IMR-90 (cell line): ENCODE measurements at regions of chr2 and their contacts with region 1.

Region 1: GRCh38 chr2:215698566-215698965 is 262.7 kb upstream of the FN1 start:
- DNase-seq: peak; percentile 96
- ATAC-seq: peak; percentile 25
- H3K4me3 ChIP-seq: no peak overlapping the region
- H3K27ac ChIP-seq: peak overlapping the region; percentile 80; the same call in 1 of the 2 replicates
- H3K4me1 ChIP-seq: peaks cover 12% of the 10 kb centered on the region
- H3K27me3 ChIP-seq: no peaks in the 10 kb centered on the region
- CTCF ChIP-seq: no peak
- POLR2A ChIP-seq: no peak
- RAD21 ChIP-seq: no peak

Region 2: DNA sequence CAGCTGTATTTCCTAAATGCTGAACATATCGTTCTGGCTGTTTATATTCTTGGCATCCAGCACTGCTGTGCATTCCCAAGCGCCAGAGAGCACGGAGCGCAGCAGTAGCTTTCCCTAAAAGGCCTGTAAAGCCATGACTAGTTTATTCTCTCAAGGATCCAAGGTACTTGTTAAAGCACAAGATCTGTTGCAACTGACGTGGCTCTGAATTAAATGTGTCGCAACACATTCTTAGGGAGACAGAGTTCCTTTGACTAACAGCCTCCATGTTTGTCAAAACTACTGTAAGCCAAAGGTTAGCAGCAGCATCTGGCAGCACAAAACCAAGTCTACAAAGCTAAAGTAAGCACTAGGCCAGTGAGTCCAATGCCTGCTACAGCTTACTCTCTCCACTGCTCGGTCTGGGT is 74.1 kb before region 1 on chr2:
- CTCF ChIA-PET with region 1: no interaction called
- POLR2A ChIA-PET with region 1: no interaction called
- dilution Hi-C with region 1: no loop called
- in situ Hi-C with region 1: no loop called
- intact Hi-C with region 1: loop called (anchors 2 kb)
- DNase-seq: peak; percentile 100
- ATAC-seq: peak; percentile 95
- H3K4me3 ChIP-seq: no peak overlapping the region
- H3K27ac ChIP-seq: peak overlapping the region; percentile 92; the same call in 1 of the 2 replicates
- H3K4me1 ChIP-seq: peaks cover 11% of the 10 kb centered on the region
- H3K27me3 ChIP-seq: no peaks in the 10 kb centered on the region
- CTCF ChIP-seq: no peak
- POLR2A ChIP-seq: 0 out of 2 replicates have a peak, but pooled peaks have one; percentile 10
- RAD21 ChIP-seq: peak; percentile 30

Region 3: GRCh38 chr2:215711471-215712034 is 13.0 kb after region 1 on chr2:
- CTCF ChIA-PET with region 1: interaction called, 3 read pairs
- POLR2A ChIA-PET with region 1: no interaction called
- dilution Hi-C with region 1: no loop called
- in situ Hi-C with region 1: no loop called
- intact Hi-C with region 1: loop called (anchors 2 kb)
- DNase-seq: peak; percentile 78
- ATAC-seq: peak; percentile 31; the same call in 1 of the 2 replicates
- H3K4me3 ChIP-seq: no peak overlapping the region
- H3K27ac ChIP-seq: peak overlapping the region; percentile 21; the same call in 1 of the 2 replicates
- H3K4me1 ChIP-seq: peaks cover 26% of the 10 kb centered on the region
- H3K27me3 ChIP-seq: no peaks in the 10 kb centered on the region
- CTCF ChIP-seq: no peak
- POLR2A ChIP-seq: no peak
- RAD21 ChIP-seq: no peak

Region 4: DNA sequence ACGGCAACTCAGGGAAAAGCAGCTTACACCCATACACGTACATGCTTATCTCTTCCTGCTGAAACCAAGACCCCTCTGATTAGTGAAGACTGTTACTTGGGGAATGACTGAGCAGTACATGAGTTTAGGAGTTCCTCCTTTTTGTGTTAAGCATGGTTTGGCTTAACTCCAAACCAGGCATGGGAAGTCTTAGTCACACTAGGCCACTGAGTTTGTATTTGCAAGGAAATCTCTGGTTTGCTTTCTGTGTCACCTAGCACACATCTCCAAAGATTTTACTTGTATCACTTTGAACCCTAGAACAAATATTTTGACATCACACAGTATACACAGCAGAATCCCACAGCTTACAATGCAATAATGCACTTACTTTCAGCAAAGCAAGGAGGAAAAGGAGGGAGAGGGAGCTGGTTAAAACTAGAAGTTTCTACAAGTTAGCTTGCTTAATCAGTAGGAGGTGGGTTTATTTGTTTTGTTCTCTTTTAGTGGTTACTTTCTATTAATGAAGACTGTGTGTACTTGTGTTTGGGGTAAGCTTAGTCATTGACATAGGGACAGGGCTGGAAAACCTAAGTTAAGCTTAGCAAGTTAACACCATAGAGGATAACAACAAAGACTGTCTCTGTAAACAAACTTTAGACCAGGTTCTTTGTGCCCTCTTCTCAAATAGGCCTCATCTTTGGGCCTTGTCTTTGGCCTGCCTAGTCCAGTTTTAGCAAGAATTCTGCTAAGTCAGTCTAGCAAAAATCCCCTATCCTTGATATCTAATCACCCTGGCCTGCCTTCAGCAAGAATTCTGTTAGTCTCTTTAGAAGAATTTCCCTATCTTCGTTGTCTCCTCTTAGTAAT is 95.4 kb after region 1 on chr2:
- CTCF ChIA-PET with region 1: no interaction called
- POLR2A ChIA-PET with region 1: interaction called, 12 read pairs
- dilution Hi-C with region 1: no loop called
- in situ Hi-C with region 1: no loop called
- intact Hi-C with region 1: loop called (anchors 5 kb)
- DNase-seq: peak; percentile 98
- ATAC-seq: peak; percentile 84
- H3K4me3 ChIP-seq: no peak overlapping the region
- H3K27ac ChIP-seq: peak overlapping the region; percentile 48; the same call in 1 of the 2 replicates
- H3K4me1 ChIP-seq: peaks cover 11% of the 10 kb centered on the region
- H3K27me3 ChIP-seq: no peaks in the 10 kb centered on the region
- CTCF ChIP-seq: no peak
- POLR2A ChIP-seq: no peak
- RAD21 ChIP-seq: no peak